Activated CD4-positive, alpha-beta T cell treated with anti-CD3 and anti-CD28 coated beads, Interleukin-2, amount 10 ng/mL, durations not matched to agents 24 days and 14 days (primary cell): ENCODE measurements at regions of chr17 and their contacts with region 1.

Region 1: GRCh38 chr17:27293898-27294688 is at the start of gene WSB1:
- DNase-seq: peak; percentile 98
- H3K4me3 Mint-ChIP-seq: peak within 1 kb of the TSS; percentile 98
- H3K27ac Mint-ChIP-seq: peak within 1 kb of the TSS; percentile 100
- H3K4me1 Mint-ChIP-seq: peaks cover 30% of the 10 kb centered on the region
- H3K27me3 Mint-ChIP-seq: no peaks in the 10 kb centered on the region
- total RNA-seq, gene WSB1: 135 and 136 TPM in 2 replicates

Region 2: GRCh38 chr17:27332485-27333409 is 38.7 kb after region 1 on chr17:
- intact Hi-C with region 1: loop called (anchors 1 kb)
- DNase-seq: peak; percentile 96
- H3K4me3 Mint-ChIP-seq: peak overlapping the region; percentile 86
- H3K27ac Mint-ChIP-seq: peak overlapping the region; percentile 98
- H3K4me1 Mint-ChIP-seq: peaks cover 22% of the 10 kb centered on the region
- H3K27me3 Mint-ChIP-seq: peaks cover 1% of the 10 kb centered on the region